Activated CD8-positive, alpha-beta T cell treated with anti-CD3 and anti-CD28 coated beads, Interleukin-2, amount 10 ng/mL, durations not matched to agents 7 days and 5 days (primary cell): ENCODE measurements at regions of chr12 and their contacts with region 1.

Region 1: GRCh38 chr12:107109741-107110719 is 16.7 kb upstream of the CRY1 start:
- DNase-seq: no peak
- ATAC-seq: no peak
- H3K4me3 Mint-ChIP-seq: no peak overlapping the region
- H3K27ac Mint-ChIP-seq: no peak overlapping the region
- H3K4me1 Mint-ChIP-seq: no peaks in the 10 kb centered on the region
- H3K27me3 Mint-ChIP-seq: peaks cover 33% of the 10 kb centered on the region

Region 2: GRCh38 chr12:107079172-107080011 is 30.6 kb before region 1 on chr12:
- CTCF ChIA-PET with region 1: interaction called, 19 read pairs
- POLR2A ChIA-PET with region 1: no interaction called
- DNase-seq: no peak
- ATAC-seq: no peak
- H3K4me3 Mint-ChIP-seq: no peak overlapping the region
- H3K27ac Mint-ChIP-seq: no peak overlapping the region
- H3K4me1 Mint-ChIP-seq: no peaks in the 10 kb centered on the region
- H3K27me3 Mint-ChIP-seq: peaks cover 2% of the 10 kb centered on the region

Region 3: GRCh38 chr12:107184359-107184980 is 74.4 kb after region 1 on chr12:
- CTCF ChIA-PET with region 1: no interaction called
- POLR2A ChIA-PET with region 1: no interaction called
- DNase-seq: no peak
- ATAC-seq: no peak
- H3K4me3 Mint-ChIP-seq: no peak overlapping the region
- H3K27ac Mint-ChIP-seq: no peak overlapping the region
- H3K4me1 Mint-ChIP-seq: peaks cover 8% of the 10 kb centered on the region
- H3K27me3 Mint-ChIP-seq: peaks cover 26% of the 10 kb centered on the region